GM10248 (cell line): ENCODE measurements at regions of chr7 and their contacts with region 1.

Region 1: GRCh38 chr7:26305463-26306273 is 14.0 kb downstream of the SNX10 start:
- DNase-seq: no peak
- CTCF ChIP-seq: no peak

Region 2: DNA sequence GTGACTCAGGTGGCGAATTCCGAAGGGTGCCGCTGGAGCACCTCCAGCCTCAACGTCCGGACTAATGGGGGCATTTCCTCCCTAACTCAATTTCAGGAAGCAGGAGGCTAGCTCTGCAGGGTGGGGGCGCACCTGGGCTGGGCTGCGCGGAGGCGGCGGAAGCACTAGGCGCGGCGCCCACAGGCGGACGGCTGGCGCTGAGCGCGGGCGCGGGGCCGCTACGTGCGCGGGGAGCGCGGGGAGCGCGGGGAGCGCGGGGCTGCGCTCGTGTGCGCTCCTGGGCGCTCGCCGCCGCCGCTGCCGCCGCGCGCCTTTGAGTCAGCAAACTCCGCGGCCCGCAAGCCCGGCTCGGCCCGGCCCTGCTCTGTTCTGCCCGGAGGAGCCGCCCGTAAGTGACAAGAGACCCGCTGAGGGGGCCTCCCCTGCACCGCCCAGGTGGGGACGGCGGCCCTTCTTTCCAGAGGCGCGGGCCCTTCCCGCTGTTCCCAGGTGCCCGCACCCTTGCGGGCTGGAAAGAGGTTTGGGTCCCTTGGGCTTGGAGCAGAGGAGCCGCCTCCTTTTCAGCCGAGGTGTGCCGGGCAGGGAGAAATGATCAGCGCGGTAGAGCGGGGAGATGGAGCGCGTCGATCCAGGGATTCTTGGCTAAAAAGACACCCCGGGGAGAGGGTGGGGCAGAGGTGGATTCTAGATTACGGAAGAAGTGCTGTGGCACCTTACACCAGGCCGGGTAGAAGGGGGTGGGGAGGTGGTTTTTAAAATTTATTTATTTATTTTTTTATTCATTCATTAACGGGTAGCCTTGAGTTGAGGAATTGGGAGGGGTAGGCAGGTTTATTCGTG is 13.7 kb before region 1 on chr7 and contains the start of gene SNX10:
- CTCF ChIA-PET with region 1: interaction called, 18 read pairs
- POLR2A ChIA-PET with region 1: no interaction called
- DNase-seq: peak; percentile 76
- CTCF ChIP-seq: peak; percentile 85